A673 (cell line): ENCODE measurements at regions of chr4 and their contacts with region 1.

Region 1: DNA sequence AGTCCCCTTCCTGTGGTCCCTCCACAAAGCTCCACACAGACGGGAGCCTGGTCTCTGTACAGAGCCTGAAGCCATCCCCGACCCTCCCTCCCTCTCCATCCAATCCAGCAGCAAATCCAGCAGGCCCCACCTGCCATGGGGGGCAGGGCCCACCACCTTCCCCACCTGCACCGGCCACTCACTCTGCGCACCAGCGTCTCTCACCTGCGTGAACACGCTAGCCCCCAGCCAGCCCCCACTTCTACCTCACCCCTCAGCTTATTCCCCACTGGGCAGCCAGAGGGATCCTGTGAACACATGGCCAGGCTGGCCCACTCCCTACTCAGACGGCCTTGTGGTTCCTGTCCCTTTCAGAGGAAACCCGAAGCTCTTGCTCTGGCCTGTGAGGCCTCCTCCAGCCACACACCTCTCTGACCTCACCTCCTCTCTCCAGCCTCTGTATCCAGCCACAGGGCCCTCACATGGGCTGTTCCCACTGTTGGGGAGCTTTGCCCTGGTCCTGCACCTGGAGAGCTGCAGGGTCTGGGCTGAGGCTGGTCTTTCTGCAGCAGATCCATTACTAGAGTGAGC is 70.9 kb downstream of the WFS1 start:
- DNase-seq: no peak
- H3K4me3 ChIP-seq: no peak overlapping the region
- H3K27ac ChIP-seq: no peak overlapping the region
- H3K4me1 ChIP-seq: no peaks in the 10 kb centered on the region
- H3K27me3 ChIP-seq: peaks cover 47% of the 10 kb centered on the region
- CTCF ChIP-seq: no peak

Region 2: GRCh38 chr4:6180841-6181631 is 159.5 kb before region 1 on chr4:
- CTCF ChIA-PET with region 1: no interaction called
- POLR2A ChIA-PET with region 1: interaction called, 10 read pairs
- intact Hi-C with region 1: no loop called
- DNase-seq: no peak
- H3K4me3 ChIP-seq: no peak overlapping the region
- H3K27ac ChIP-seq: no peak overlapping the region
- H3K4me1 ChIP-seq: no peaks in the 10 kb centered on the region
- H3K27me3 ChIP-seq: peaks cover 9% of the 10 kb centered on the region
- CTCF ChIP-seq: no peak

Region 3: GRCh38 chr4:7073526-7074390 is 733.2 kb after region 1 on chr4:
- CTCF ChIA-PET with region 1: no interaction called
- POLR2A ChIA-PET with region 1: no interaction called
- intact Hi-C with region 1: no loop called
- DNase-seq: peak; percentile 78
- H3K4me3 ChIP-seq: no peak overlapping the region
- H3K27ac ChIP-seq: no peak overlapping the region
- H3K4me1 ChIP-seq: no peaks in the 10 kb centered on the region
- H3K27me3 ChIP-seq: no peaks in the 10 kb centered on the region
- CTCF ChIP-seq: no peak